ENCODE measurements at regions of chr5 and their contacts with region 1.

Region 1: GRCh38 chr5:127580731-127581130 is 63.3 kb downstream of the PRRC1 start:
- DNase-seq: no peak
- ATAC-seq: no peak
- H3K4me3 ChIP-seq: no peak overlapping the region
- H3K27ac ChIP-seq: no peak overlapping the region
- H3K4me1 ChIP-seq: no peaks in the 10 kb centered on the region
- H3K27me3 ChIP-seq: no peaks in the 10 kb centered on the region
- CTCF ChIP-seq: no peak

Region 2: DNA sequence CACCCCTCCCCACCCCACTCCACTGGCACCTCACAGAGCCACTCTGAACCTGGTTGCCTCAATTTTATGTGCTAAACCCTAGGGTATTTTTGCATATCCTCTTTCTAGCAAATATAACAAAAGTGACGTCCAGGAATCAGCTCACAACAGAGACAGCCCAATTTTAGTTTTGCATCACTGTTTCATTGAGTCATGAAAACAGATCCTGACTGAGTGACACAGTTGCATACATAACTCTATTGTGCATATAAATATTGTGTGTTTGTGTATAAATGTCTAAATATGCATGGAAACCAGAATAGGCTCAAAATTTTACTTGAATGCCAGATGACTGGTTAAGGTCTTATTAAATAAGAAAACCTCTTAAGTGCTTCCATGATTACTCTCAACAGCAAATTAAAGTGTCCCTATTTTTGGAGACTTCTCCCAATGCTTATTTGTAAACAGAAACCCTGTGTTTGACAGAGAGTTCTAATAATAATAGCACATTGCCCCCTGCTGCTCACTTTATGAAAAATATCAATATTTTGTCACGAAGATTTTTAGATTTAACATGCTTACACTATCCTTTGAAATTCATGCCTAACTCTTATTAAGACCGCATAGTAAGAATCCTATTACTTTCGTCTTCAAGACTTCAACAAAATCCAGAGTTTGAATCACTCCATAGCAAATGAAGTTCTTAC is 138.8 kb before region 1 on chr5:
- CTCF ChIA-PET with region 1: no interaction called
- POLR2A ChIA-PET with region 1: no interaction called
- intact Hi-C with region 1: no loop called
- DNase-seq: peak; percentile 42
- ATAC-seq: no peak
- H3K4me3 ChIP-seq: no peak overlapping the region
- H3K27ac ChIP-seq: no peak overlapping the region
- H3K4me1 ChIP-seq: no peaks in the 10 kb centered on the region
- H3K27me3 ChIP-seq: peaks cover 72% of the 10 kb centered on the region
- CTCF ChIP-seq: peak; percentile 58

Region 3: GRCh38 chr5:127700237-127700766 is 119.6 kb after region 1 on chr5:
- CTCF ChIA-PET with region 1: no interaction called
- POLR2A ChIA-PET with region 1: interaction called, 12 read pairs
- intact Hi-C with region 1: no loop called
- DNase-seq: no peak
- ATAC-seq: no peak
- H3K4me3 ChIP-seq: no peak overlapping the region
- H3K27ac ChIP-seq: no peak overlapping the region
- H3K4me1 ChIP-seq: peaks cover 12% of the 10 kb centered on the region
- H3K27me3 ChIP-seq: peaks cover 61% of the 10 kb centered on the region
- CTCF ChIP-seq: no peak

Measured in PC-3 (cell line).